Right ventricle myocardium inferior (tissue), 1 donor: ENCODE measurements at regions of chr20 and their contacts with region 1.

Region 1: DNA sequence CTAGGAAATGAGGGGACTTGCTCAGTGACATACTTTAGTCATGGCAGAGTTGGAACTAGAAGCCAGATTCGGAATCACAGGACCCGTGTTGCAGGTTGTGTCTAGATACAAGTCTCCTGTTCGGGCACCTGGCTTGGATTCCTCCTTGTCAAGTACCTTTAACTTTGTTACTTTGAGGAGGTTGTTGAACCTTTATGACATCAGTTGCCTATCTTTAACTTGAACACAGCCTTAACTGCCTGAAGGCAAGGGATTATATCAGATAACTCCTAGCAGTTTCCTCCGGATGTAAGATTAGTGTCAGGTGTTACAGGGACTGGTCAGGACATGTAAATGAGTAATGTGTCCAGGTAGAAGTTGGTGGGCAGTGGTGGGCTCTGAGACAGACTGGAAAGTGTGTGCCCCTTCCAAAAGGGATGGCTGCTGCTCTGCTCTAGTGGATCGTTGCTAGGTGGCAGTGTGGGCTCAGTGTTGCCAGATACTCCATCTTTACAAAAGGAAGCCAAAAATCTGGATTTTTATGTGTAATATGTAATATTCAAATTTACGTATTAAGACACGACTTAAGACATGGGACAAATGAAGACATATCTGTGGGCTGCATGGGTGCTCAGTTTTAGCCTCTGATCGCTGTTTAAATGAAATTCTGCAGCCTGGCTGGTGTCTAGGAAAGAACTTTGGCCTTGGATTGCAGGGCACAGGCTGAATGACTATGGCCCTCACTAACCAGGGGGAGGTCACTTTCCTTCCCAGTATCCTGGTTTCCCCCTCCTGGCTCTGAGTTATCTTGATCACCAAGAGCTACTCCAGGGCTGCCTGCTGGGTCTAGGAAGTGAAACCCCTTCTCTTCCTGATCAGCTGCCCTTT is 27.1 kb downstream of the CHMP4B start:
- DNase-seq: no peak
- ATAC-seq: no peak

Region 2: DNA sequence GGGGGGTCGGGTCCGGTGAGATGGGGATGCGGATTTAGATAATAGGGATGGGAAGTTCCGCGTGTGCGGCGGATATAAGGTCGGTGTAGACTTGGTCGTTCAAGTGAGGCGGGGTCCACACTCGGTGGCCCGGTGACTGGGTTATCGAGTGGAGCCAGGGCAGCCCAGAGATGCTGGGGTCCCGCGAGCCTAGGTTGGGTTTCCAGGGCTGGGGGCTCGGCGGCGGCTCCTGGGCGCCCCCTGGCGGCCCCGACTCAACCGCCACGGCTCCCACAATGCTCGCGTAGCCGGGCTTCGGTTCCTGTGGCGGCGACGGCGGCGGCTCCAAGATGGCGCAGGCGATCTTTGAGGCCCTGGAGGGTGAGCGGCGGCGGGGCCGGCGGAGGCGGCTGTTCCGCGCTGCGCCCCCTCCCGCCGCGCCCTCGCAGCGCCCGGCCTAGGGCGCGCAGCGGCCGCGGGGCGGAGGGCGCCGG is 106.5 kb before region 1 on chr20 and contains the start of gene ZNF341:
- intact Hi-C with region 1: loop called (anchors 5 kb)
- DNase-seq: peak; percentile 95
- ATAC-seq: peak; percentile 91
- total RNA-seq, gene ZNF341: 1.8 TPM